Uterus (tissue), 4 donors: ENCODE measurements at regions of chr7 and their contacts with region 1.

Region 1: GRCh38 chr7:149838224-149838947 is at the start of gene ZNF862:
- DNase-seq: peak; percentile 97
- H3K4me3 ChIP-seq: peak within 1 kb of the TSS; percentile 61 to 90
- H3K27ac ChIP-seq: peak within 1 kb of the TSS; percentile 83 to 96
- H3K4me1 ChIP-seq: no peaks in the 10 kb centered on the region
- H3K27me3 ChIP-seq: no peaks in the 10 kb centered on the region
- CTCF ChIP-seq: peak in 2 of 4 experiments; percentile 10 to 30
- POLR2A ChIP-seq: peak; percentile 81 to 90
- total RNA-seq, gene ZNF862: 1.8 to 39.4 (median 14.6) TPM

Region 2: DNA sequence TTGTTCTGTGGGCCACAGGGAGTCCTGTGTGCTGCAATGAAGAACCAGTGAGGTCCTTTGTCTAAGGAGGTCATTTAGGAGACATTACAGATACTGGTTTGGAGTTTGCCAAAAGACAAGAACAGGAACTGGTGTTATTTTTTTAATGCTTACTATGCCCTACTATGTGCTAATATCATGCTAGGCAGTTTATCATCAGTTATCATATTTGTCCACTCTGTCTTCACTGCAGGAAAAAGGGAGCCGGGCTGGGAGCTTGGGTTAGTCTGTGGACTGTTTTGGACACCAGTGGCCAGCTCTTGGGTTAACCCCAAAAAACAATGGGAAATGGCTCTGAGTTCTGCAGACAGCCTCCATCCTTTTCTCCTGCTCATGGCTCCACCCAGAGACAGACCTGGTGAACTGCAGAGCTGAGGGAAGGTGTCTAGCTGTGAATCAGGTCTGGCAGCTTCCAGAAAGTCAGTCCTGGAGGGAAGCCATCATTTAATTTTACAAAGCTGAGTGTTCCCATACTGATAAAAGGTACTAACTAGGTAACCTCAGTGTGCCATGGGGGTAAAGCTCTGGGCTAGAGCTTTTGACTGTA is 239.6 kb before region 1 on chr7:
- intact Hi-C with region 1: no loop called
- DNase-seq: no peak
- H3K4me3 ChIP-seq: no peak overlapping the region
- H3K27ac ChIP-seq: no peak overlapping the region
- H3K4me1 ChIP-seq: no peaks in the 10 kb centered on the region
- H3K27me3 ChIP-seq: no peaks in the 10 kb centered on the region
- CTCF ChIP-seq: no peak
- POLR2A ChIP-seq: no peak

Region 3: DNA sequence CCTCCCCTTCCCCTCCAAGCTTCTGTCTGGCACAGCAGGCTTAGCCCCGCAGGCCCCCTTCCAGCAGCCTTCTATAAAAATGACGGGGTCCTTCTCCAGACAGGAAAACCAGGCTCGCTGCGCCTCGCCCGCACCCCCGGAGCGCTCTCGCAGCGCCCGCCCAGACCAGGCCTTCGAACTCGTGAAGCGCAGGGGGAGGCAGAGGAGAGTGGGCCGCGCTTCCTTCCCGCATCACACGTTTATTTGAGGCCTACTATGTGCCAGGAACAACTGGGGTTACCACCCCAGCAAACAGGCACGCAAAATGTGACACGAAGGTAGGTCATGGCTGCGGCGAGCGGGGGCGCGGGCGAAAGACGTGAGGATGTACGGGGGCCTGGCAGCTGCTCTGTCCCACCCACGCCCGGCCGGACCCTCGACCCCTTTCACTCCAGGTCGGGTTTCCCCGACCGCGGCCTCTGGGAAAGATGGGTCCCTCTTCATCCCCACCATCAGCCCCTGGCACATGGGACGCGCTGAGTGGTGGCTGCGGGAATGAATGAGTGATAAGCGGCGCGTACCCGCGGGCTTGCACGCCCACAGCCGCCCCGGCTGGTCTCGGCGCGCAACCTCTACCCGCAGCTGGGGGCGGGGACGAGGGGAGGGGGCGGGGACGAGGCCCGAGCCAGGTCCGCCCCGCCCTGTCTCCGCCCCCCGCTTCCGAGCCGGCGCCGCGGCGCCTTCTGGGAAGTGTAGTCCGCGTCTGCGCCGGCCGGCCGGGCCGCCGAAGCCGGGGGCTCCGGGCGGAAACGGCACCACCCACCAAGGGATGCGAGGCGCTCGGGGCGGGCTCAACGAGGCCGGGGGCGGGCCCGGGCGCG is 124.1 kb before region 1 on chr7:
- intact Hi-C with region 1: loop called (anchors 5 kb)
- DNase-seq: peak; percentile 89 to 92
- H3K4me3 ChIP-seq: peak overlapping the region; percentile 53 to 76
- H3K27ac ChIP-seq: peak overlapping the region; percentile 66 to 86
- H3K4me1 ChIP-seq: no peaks in the 10 kb centered on the region
- H3K27me3 ChIP-seq: no peaks in the 10 kb centered on the region
- CTCF ChIP-seq: no peak
- POLR2A ChIP-seq: no peak

Region 4: GRCh38 chr7:149771721-149772240 is 66.6 kb before region 1 on chr7:
- intact Hi-C with region 1: loop called (anchors 10 kb)
- DNase-seq: peak; percentile 90 to 94
- H3K4me3 ChIP-seq: peak overlapping the region; percentile 48 to 78
- H3K27ac ChIP-seq: peak overlapping the region; percentile 69 to 73
- H3K4me1 ChIP-seq: no peaks in the 10 kb centered on the region
- H3K27me3 ChIP-seq: no peaks in the 10 kb centered on the region
- CTCF ChIP-seq: no peak
- POLR2A ChIP-seq: peak in 1 of 2 donors; percentile 52

Region 5: DNA sequence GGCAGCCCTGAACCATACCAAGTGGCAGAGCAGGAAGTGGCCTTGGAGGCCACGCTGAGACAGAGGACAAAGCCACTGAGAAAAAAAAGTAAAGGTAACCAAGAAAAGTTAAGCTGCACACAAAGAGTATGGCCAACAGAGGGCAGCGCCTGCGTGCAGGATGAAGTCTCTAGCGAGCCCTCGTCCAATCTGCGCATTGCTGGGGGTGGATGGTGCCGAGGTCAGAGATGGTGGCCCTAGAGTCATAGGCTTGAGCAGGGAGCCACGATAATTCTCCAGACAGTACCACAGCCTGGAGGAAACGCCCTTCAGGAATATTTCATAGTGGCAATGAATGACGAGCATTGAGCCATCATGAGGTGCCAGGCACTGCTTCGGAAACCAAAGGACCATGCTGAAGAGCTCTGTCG is 45.1 kb after region 1 on chr7:
- intact Hi-C with region 1: no loop called
- DNase-seq: peak; percentile 49
- H3K4me3 ChIP-seq: no peak overlapping the region
- H3K27ac ChIP-seq: peak overlapping the region; percentile 16 to 52
- H3K4me1 ChIP-seq: peaks cover 0 to 9% of the 10 kb centered on the region in 2 donors
- H3K27me3 ChIP-seq: no peaks in the 10 kb centered on the region
- CTCF ChIP-seq: peak; percentile 39 to 58 (median 52)
- POLR2A ChIP-seq: no peak

Region 6: DNA sequence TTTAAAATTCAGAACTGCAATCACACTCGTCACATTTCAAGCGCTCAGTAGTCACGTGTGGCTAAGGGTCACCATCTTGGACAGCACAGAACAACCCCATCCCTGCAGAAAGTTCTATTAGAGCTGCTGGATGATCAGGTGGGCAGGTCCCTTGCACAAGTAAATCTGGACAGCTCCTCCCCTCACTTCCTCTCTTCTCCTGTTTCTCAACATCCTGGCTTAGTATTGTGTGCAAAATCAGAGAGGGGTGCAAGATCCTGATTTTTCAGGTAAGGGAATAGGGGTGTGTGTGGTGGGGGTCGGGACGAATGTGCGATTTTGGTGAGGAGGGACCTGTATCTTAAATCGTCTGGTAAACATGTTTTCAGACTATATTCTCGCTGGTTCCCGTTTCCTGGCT is 728.8 kb after region 1 on chr7 and contains the start of gene GIMAP4:
- intact Hi-C with region 1: no loop called
- DNase-seq: peak in 1 of 2 donors; percentile 32
- H3K4me3 ChIP-seq: peak within 1 kb of the TSS; percentile 23 to 27
- H3K27ac ChIP-seq: peak within 1 kb of the TSS; percentile 55 to 62
- H3K4me1 ChIP-seq: no peaks in the 10 kb centered on the region
- H3K27me3 ChIP-seq: no peaks in the 10 kb centered on the region
- CTCF ChIP-seq: no peak
- POLR2A ChIP-seq: peak in 1 of 2 donors; percentile 66
- total RNA-seq, gene GIMAP4: 39.0 to 116 (median 75.7) TPM

Region 7: DNA sequence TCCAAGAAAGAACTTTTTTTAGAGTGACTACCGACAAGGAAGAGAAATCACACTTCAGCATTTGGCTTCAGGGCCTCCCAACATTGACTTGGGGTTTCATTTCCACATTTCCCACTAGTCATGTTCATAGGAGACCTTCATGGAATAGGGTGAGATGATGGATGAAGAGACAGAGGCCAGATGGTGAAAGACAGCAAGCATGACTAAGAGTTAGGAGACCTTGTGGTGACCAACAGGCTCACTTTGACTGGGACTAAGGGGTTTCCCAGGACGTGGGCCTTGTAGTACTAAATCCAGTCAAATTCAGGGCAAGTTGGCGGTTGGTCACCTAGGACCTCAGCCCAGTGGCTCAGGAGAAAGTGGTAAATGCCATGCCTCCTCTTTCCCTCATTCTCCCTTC is 895.9 kb after region 1 on chr7:
- intact Hi-C with region 1: no loop called
- DNase-seq: no peak
- H3K4me3 ChIP-seq: no peak overlapping the region
- H3K27ac ChIP-seq: no peak overlapping the region
- H3K4me1 ChIP-seq: no peaks in the 10 kb centered on the region
- H3K27me3 ChIP-seq: no peaks in the 10 kb centered on the region
- CTCF ChIP-seq: no peak
- POLR2A ChIP-seq: no peak